RWPE1 (cell line): ENCODE measurements at regions of chr1 and their contacts with region 1.

Region 1: GRCh38 chr1:162847839-162848453 is 13.0 kb downstream of the CCDC190 start:
- DNase-seq: peak; percentile 56
- H3K27ac ChIP-seq: no peak overlapping the region
- CTCF ChIP-seq: peak; percentile 94

Region 2: DNA sequence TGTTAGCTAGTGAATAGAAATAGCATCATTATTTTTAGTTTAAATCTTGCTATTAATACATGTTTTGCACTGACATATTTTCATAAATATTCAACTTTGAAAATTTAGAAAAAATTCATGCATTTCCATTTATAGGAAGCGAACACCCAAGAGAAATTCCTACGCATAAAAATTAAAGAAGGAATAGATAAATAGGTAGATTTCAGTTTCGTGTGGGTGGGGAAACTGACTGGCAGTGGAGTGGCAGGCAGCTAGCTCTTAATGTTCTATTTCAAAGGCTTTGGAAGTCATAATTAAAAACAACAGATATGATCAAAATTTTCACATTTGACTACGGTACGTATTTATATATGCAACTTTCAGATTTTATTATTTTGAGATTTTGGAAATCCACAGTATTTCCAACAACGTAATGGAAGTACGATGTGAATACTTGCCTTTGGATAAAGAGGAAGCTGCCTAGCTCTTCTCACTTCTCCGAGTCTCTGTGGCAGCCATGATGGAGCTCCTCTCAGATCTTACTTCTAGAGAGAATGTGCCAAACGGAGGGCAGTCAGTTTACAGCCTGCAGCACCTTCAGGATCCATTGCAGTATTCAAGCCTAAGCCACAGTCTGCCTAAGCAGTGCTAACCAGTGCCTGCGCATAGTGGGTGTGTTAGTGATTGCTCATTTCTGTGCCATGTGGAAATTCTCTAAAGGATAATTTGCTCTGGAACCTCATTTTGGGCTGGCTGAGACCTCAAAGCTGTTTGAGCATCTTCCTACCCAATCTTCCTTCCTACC is 158.3 kb after region 1 on chr1:
- CTCF ChIA-PET with region 1: interaction called, 12 read pairs
- POLR2A ChIA-PET with region 1: no interaction called
- DNase-seq: no peak
- H3K27ac ChIP-seq: no peak overlapping the region
- CTCF ChIP-seq: no peak

Region 3: DNA sequence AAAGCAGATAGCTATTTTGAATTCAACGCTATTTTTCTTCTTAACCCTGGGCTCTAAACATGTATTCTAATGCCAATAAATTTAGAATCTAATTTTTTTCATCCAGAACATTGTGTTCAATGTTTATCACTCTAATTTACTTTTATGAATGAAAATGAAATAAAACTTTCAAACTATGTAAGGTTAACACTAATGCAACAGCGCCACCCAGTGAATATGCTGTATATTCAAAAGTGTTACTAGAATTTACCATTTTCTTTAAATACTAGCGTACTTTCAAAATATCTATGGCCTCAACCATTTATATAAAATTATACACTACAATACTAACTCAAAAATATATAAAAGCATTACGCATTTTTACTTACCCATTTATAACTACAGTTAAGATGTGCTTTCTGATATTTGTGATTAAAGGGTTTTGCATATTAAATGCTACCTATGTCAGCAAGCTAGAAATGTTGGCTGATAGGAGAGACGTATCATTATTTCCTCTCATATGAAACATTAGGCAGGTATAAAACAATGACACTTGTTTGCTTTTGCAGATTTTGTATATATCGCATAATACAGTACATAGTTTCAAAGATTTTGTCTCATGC is 467.9 kb after region 1 on chr1:
- CTCF ChIA-PET with region 1: interaction called, 15 read pairs
- POLR2A ChIA-PET with region 1: no interaction called
- DNase-seq: peak; percentile 6
- H3K27ac ChIP-seq: no peak overlapping the region
- CTCF ChIP-seq: peak; percentile 74